PC-3 (cell line): ENCODE measurements at regions of chr3 and their contacts with region 1.

Region 1: GRCh38 chr3:121989943-121990342 is 32.1 kb downstream of the ILDR1 start:
- DNase-seq: peak; percentile 39
- ATAC-seq: peak; percentile 77
- H3K4me3 ChIP-seq: no peak overlapping the region
- H3K27ac ChIP-seq: no peak overlapping the region
- H3K4me1 ChIP-seq: peaks cover 9% of the 10 kb centered on the region
- H3K27me3 ChIP-seq: no peaks in the 10 kb centered on the region
- CTCF ChIP-seq: peak; percentile 44; the same call in 1 of the 2 replicates

Region 2: DNA sequence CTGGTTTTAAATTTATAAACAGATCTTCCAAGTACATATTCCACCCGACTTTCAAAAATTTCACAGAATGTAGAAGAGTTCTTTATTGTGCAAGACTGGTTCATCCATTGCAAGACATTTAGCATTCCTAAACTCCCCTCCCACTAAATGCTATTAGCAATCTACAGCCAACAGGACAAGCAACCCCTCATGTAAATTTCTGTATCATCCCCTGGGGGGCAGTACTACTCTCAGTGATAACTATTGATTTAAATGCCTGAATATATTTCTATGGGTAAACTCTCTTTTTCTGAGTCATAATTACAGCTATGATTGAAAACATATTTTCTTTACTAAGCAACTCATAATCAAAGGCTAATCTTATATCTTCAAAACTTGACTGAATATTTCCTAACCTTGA is 106.4 kb before region 1 on chr3:
- CTCF ChIA-PET with region 1: interaction called, 11 read pairs
- POLR2A ChIA-PET with region 1: no interaction called
- intact Hi-C with region 1: loop called (anchors 1 kb)
- DNase-seq: peak; percentile 89
- ATAC-seq: peak; percentile 82
- H3K4me3 ChIP-seq: no peak overlapping the region
- H3K27ac ChIP-seq: no peak overlapping the region
- H3K4me1 ChIP-seq: peaks cover 9% of the 10 kb centered on the region; the same call in 1 of the 2 replicates
- H3K27me3 ChIP-seq: no peaks in the 10 kb centered on the region
- CTCF ChIP-seq: peak; percentile 95